Psoas muscle (tissue), 8 donors: ENCODE measurements at regions of chrX and their contacts with region 1.

Region 1: DNA sequence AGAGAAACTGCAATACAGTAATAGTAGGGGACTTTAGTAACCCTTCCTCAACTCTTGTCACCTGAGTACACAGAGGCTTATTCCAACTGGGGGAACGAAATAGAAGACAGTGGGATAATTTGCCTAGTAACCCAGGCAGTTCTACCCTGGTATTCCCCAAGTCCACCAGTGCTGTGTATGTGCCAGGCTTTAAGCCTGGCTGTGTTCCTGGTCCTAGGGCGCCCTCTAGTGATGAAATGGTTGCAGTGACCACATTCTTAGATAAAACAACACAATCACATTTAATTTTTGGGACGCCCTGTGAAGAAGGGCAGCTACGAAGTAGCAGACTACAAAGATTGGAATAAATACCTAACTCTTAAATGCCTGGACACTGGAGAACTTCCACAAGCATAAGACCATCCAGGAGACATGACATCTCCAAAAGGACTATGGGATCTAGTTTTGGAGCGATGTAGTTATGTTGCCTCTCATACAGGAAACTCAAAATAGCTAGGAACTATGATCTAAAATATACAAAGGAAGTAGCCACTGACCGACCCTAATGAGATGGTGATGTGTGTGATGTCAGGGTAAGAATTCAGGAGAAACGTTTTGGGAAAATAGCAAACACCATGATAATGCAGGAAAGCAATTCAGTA is 288.5 kb upstream of the ZCCHC13 start:
- DNase-seq: peak; percentile 34 to 61
- ATAC-seq: peak; percentile 82 to 91 (median 86)
- H3K4me3 ChIP-seq: no peak overlapping the region
- H3K27ac ChIP-seq: no peak overlapping the region
- H3K4me1 ChIP-seq: no peaks in the 10 kb centered on the region
- H3K27me3 ChIP-seq: no peaks in the 10 kb centered on the region
- CTCF ChIP-seq: peak; percentile 91

Region 2: GRCh38 chrX:74133156-74133796 is 117.8 kb after region 1 on chrX:
- intact Hi-C with region 1: loop called (anchors 10 kb)
- DNase-seq: no peak
- ATAC-seq: peak; percentile 76 to 92 (median 79)
- H3K4me3 ChIP-seq: no peak overlapping the region
- H3K27ac ChIP-seq: no peak overlapping the region
- H3K4me1 ChIP-seq: no peaks in the 10 kb centered on the region
- H3K27me3 ChIP-seq: peaks cover 0 to 8% (median 0%) of the 10 kb centered on the region in 3 donors
- CTCF ChIP-seq: peak; percentile 83